Endothelial cell of umbilical vein (primary cell): ENCODE measurements at regions of chr3 and their contacts with region 1.

Region 1: GRCh38 chr3:72447059-72447946 is 400.9 kb downstream of the SHQ1 start:
- DNase-seq: peak; percentile 84
- H3K4me3 ChIP-seq: peak overlapping the region in 2 of 3 experiments; percentile 23 to 95
- H3K27ac ChIP-seq: no peak overlapping the region
- H3K4me1 ChIP-seq: peaks cover 10% of the 10 kb centered on the region
- H3K27me3 ChIP-seq: peaks cover 11 to 14% of the 10 kb centered on the region in 2 experiments
- CTCF ChIP-seq: no peak
- POLR2A ChIP-seq: no peak

Region 2: DNA sequence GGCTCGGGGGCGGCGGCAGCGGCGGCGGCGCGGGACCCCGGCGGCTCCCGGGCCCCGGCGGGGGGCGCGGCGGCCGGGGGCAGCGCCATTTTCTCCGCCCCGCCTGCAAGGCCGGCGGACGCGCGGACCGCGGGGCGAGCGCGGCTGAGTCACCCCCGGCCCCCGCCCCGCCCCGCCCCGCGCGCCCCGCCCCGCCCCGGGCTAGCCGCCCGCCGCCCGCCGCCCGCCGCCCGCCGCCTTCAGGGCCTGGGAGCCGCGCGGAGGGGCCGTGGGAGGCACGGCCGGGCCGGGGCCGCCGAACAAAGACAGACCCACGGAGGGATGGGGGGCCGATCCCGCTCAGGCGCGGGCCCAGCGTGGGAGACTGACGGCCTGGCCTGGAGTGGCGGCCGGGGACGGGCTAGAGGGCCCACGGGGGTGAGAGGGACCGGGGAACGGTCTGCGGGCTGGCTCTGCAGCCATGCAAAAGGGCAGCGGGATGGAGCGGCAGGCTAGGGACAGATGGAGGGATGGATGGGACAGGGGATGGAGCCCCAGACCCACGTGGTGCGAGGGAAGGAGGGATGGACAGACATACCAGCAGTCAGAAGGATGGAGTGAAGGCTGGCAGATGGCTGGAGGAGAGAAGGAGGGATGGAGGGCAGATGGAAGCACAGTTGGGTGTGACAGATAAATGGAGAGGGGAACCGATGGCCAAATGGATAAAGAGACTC is 721.9 kb before region 1 on chr3 and contains the start of gene EIF4E3:
- CTCF ChIA-PET with region 1: no interaction called
- POLR2A ChIA-PET with region 1: no interaction called
- dilution Hi-C with region 1: no loop called
- intact Hi-C with region 1: loop called (anchors 10 kb)
- DNase-seq: no peak
- H3K4me3 ChIP-seq: peak within 1 kb of the TSS; percentile 6 to 54 (median 43)
- H3K27ac ChIP-seq: no peak within 1 kb of the TSS
- H3K4me1 ChIP-seq: peaks cover 5% of the 10 kb centered on the region
- H3K27me3 ChIP-seq: peaks cover 22 to 29% of the 10 kb centered on the region in 2 experiments
- CTCF ChIP-seq: no peak
- POLR2A ChIP-seq: no peak
- total RNA-seq, gene EIF4E3: 4.9 and 7.6 TPM in 2 replicates

Region 3: GRCh38 chr3:72185549-72186399 is 261.5 kb before region 1 on chr3:
- CTCF ChIA-PET with region 1: no interaction called
- POLR2A ChIA-PET with region 1: no interaction called
- dilution Hi-C with region 1: no loop called
- intact Hi-C with region 1: loop called (anchors 10 kb)
- DNase-seq: peak; percentile 64
- H3K4me3 ChIP-seq: no peak overlapping the region
- H3K27ac ChIP-seq: no peak overlapping the region
- H3K4me1 ChIP-seq: peaks cover 14% of the 10 kb centered on the region
- H3K27me3 ChIP-seq: peaks cover 0 to 2% of the 10 kb centered on the region in 2 experiments
- CTCF ChIP-seq: no peak
- POLR2A ChIP-seq: no peak

Region 4: GRCh38 chr3:72310419-72311380 is 136.6 kb before region 1 on chr3:
- CTCF ChIA-PET with region 1: no interaction called
- POLR2A ChIA-PET with region 1: no interaction called
- dilution Hi-C with region 1: no loop called
- intact Hi-C with region 1: loop called (anchors 1 kb)
- DNase-seq: peak; percentile 97
- H3K4me3 ChIP-seq: no peak overlapping the region
- H3K27ac ChIP-seq: peak overlapping the region; percentile 57
- H3K4me1 ChIP-seq: peaks cover 18% of the 10 kb centered on the region
- H3K27me3 ChIP-seq: peaks cover 17 to 20% of the 10 kb centered on the region in 2 experiments
- CTCF ChIP-seq: peak in 1 of 2 donors; percentile 37
- POLR2A ChIP-seq: peak; percentile 49

Region 5: GRCh38 chr3:72341920-72342319 is 105.4 kb before region 1 on chr3:
- CTCF ChIA-PET with region 1: no interaction called
- POLR2A ChIA-PET with region 1: no interaction called
- dilution Hi-C with region 1: no loop called
- intact Hi-C with region 1: no loop called
- DNase-seq: no peak
- H3K4me3 ChIP-seq: no peak overlapping the region
- H3K27ac ChIP-seq: no peak overlapping the region
- H3K4me1 ChIP-seq: peaks cover 3% of the 10 kb centered on the region
- H3K27me3 ChIP-seq: no peaks in the 10 kb centered on the region
- CTCF ChIP-seq: no peak
- POLR2A ChIP-seq: no peak

Region 6: GRCh38 chr3:72413228-72413627 is 34.1 kb before region 1 on chr3:
- CTCF ChIA-PET with region 1: no interaction called
- POLR2A ChIA-PET with region 1: no interaction called
- dilution Hi-C with region 1: no loop called
- intact Hi-C with region 1: no loop called
- DNase-seq: peak; percentile 83
- H3K4me3 ChIP-seq: no peak overlapping the region
- H3K27ac ChIP-seq: no peak overlapping the region
- H3K4me1 ChIP-seq: peaks cover 17% of the 10 kb centered on the region
- H3K27me3 ChIP-seq: no peaks in the 10 kb centered on the region
- CTCF ChIP-seq: no peak
- POLR2A ChIP-seq: no peak

Region 7: GRCh38 chr3:72482589-72483321 is 35.5 kb after region 1 on chr3:
- CTCF ChIA-PET with region 1: no interaction called
- POLR2A ChIA-PET with region 1: no interaction called
- dilution Hi-C with region 1: no loop called
- intact Hi-C with region 1: loop called (anchors 1 kb)
- DNase-seq: peak; percentile 87
- H3K4me3 ChIP-seq: peak overlapping the region; percentile 24 to 73 (median 62)
- H3K27ac ChIP-seq: peak overlapping the region; percentile 44
- H3K4me1 ChIP-seq: peaks cover 15% of the 10 kb centered on the region
- H3K27me3 ChIP-seq: no peaks in the 10 kb centered on the region
- CTCF ChIP-seq: no peak
- POLR2A ChIP-seq: no peak